Endothelial cell of umbilical vein (primary cell): ENCODE measurements at regions of chr11 and their contacts with region 1.

Region 1: DNA sequence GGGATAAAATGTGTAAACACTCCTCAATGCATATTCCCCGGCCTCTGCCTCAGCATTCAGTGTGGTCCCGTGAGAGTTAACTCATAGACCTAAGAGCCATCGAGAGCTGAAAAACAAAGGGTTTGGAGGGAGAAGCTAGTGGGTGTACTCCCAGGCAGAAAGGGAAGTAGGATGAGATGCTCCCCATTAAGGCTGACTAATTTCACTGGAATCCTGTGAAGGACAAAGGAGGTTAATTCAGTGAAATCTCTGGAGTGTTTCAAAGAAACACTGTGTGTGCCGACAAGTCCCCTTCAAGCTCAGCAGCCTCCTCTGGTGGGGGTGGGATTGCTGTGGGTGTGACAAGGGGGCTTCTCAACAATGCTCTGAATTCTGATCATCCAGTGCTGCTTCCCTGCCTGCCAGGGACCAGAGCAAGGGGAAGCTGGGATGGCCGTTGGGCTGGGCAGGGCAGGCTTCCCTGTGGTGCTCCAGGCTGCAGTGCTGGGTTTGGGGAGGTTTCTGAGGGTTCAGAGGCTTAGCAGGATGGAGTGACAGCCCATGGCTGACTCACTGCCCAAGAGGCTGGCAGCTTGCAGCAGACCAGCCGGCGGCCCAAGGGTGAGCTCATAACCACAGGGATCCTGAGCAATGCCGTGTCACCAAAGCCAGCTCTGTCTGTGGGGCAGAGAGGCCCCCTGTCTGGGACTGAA is 61.4 kb upstream of the BMAL1 start:
- DNase-seq: peak; percentile 66
- H3K4me3 ChIP-seq: peak overlapping the region in 1 of 3 experiments; percentile 17
- H3K27ac ChIP-seq: peak overlapping the region; percentile 99
- H3K4me1 ChIP-seq: peaks cover 20% of the 10 kb centered on the region
- H3K27me3 ChIP-seq: no peaks in the 10 kb centered on the region
- CTCF ChIP-seq: no peak
- POLR2A ChIP-seq: peak; percentile 53

Region 2: DNA sequence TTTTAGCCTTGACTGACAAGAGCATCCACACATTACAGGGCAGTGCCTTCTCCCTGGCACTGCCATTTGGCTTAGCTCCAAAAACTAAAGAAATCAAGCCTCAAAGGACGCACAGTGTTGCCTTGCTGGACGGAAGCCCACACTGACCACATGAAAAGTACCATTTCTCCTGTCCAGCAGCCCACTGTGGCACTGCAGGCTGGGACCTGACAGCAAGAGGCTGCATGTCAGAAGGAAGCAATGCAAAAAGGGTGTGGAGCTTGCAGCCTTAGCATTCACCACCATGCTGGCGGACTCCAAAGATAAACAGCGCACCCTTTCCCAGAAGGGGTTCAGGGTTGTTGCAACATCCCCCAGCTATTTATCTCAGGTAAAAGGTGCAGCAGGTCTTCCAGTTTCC is 47.9 kb before region 1 on chr11:
- CTCF ChIA-PET with region 1: no interaction called
- POLR2A ChIA-PET with region 1: no interaction called
- dilution Hi-C with region 1: no loop called
- intact Hi-C with region 1: no loop called
- DNase-seq: no peak
- H3K4me3 ChIP-seq: no peak overlapping the region
- H3K27ac ChIP-seq: no peak overlapping the region
- H3K4me1 ChIP-seq: no peaks in the 10 kb centered on the region
- H3K27me3 ChIP-seq: peaks cover 7 to 10% of the 10 kb centered on the region in 2 experiments
- CTCF ChIP-seq: no peak
- POLR2A ChIP-seq: no peak

Region 3: GRCh38 chr11:13276832-13277767 is 60.9 kb after region 1 on chr11:
- CTCF ChIA-PET with region 1: no interaction called
- POLR2A ChIA-PET with region 1: no interaction called
- dilution Hi-C with region 1: no loop called
- intact Hi-C with region 1: loop called (anchors 1 kb)
- DNase-seq: peak; percentile 98
- H3K4me3 ChIP-seq: peak overlapping the region; percentile 60 to 88 (median 81)
- H3K27ac ChIP-seq: no peak overlapping the region
- H3K4me1 ChIP-seq: peaks cover 13% of the 10 kb centered on the region
- H3K27me3 ChIP-seq: peaks cover 52 to 64% of the 10 kb centered on the region in 2 experiments
- CTCF ChIP-seq: no peak
- POLR2A ChIP-seq: no peak